H1 (cell line): ENCODE measurements at regions of chr1 and their contacts with region 1.

Region 1: DNA sequence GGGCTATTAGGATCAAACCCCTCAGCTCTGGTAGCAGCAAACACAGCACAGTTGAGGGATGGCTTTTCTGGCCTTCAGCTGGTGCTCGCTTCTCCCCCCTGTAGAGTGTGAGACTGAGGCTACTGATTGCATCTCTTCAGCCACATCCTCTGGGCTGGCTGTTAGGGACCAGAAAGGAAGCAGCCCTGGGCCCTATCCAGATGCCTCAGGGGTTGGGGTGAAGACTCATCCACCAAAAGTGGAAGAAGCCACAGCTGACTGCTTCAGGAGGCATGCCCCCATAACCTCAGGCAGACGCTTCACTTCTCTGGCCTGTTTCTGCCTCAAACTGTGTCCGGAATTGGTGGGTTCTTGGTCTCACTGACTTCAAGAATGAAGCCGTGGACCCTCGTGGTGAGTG is 6.2 kb upstream of the TMEM200B start:
- DNase-seq: no peak
- H3K4me3 ChIP-seq: no peak overlapping the region
- H3K27ac ChIP-seq: no peak overlapping the region
- H3K4me1 ChIP-seq: peaks cover 0 to 13% (median 9%) of the 10 kb centered on the region in 4 experiments; a peak in 6 of 7 replicates
- H3K27me3 ChIP-seq: peaks cover 0 to 7% (median 0%) of the 10 kb centered on the region in 4 experiments; a peak in 1 of 7 replicates
- CTCF ChIP-seq: no peak
- EP300 ChIP-seq: no peak
- POLR2A ChIP-seq: no peak
- RAD21 ChIP-seq: no peak

Region 2: DNA sequence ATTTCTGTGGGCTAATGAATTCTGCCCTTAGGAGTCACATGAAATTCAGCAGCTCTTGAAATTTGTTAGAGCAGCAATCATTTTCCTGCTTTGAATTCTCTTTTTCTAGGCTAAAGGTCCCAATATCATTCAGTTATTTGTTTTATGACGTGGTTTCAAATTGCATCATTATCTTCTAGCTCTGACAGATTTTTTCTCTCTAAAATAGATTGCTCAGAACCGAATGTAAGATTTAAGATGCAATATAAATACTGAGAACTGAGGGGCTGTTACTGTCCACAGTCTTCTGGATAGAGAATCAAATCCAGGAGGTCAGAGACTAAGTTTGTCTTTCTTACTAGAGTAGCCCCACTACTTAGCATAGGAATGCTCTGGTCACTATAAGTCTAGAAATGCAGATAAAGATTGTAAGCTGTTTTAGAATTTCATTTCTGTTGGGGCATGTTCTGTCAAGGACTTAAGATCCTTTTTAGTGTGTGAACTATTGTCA is 155.9 kb before region 1 on chr1:
- CTCF ChIA-PET with region 1: no interaction called
- POLR2A ChIA-PET with region 1: no interaction called
- DNase-seq: no peak
- H3K4me3 ChIP-seq: no peak overlapping the region
- H3K27ac ChIP-seq: no peak overlapping the region
- H3K4me1 ChIP-seq: peaks cover 0 to 5% (median 0%) of the 10 kb centered on the region in 4 experiments; a peak in 2 of 7 replicates
- H3K27me3 ChIP-seq: no peaks in the 10 kb centered on the region
- CTCF ChIP-seq: no peak
- EP300 ChIP-seq: no peak
- POLR2A ChIP-seq: no peak
- RAD21 ChIP-seq: no peak

Region 3: GRCh38 chr1:29145739-29146437 is 16.0 kb after region 1 on chr1:
- CTCF ChIA-PET with region 1: interaction called, 11 read pairs
- POLR2A ChIA-PET with region 1: interaction called, 19 read pairs
- DNase-seq: no peak
- H3K4me3 ChIP-seq: no peak overlapping the region
- H3K27ac ChIP-seq: no peak overlapping the region; the same call in 1 of the 2 replicates
- H3K4me1 ChIP-seq: no peaks in the 10 kb centered on the region
- H3K27me3 ChIP-seq: no peaks in the 10 kb centered on the region
- CTCF ChIP-seq: no peak
- EP300 ChIP-seq: no peak
- POLR2A ChIP-seq: peak in 1 of 2 experiments; percentile 57; a peak in 1 of 3 replicates
- RAD21 ChIP-seq: no peak